ENCODE measurements at regions of chr20 and their contacts with region 1.

Region 1: DNA sequence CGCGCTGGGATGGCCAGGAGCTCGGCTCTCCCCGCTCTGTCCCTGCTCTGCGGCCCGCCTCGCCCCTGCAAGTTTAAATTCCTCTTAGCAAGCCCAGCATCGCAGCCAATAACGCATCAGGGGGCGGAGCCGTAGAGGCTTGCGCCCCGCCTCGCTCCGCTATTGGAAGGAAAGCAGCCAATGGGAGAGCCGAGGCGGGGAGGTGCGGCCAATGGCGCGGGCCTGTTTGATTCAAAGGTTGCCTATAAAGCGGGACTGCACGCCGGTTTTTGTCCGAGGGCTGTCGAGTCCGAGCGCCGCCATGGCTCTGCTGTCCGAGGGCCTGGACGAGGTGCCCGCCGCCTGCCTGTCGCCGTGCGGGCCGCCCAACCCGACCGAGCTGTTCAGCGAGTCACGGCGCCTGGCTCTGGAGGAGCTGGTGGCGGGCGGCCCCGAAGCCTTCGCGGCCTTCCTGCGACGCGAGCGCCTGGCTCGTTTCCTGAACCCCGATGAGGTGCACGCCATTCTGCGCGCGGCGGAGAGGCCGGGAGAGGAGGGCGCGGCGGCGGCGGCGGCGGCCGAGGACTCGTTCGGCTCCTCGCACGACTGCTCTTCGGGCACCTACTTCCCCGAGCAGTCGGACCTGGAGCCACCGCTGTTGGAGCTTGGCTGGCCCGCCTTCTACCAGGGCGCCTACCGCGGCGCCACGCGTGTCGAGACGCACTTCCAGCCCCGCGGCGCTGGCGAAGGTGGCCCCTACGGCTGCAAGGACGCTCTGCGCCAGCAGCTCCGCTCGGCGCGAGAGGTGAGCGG is at the start of gene FAM83D:
- DNase-seq: peak; percentile 92 to 97 (median 96)
- H3K4me3 ChIP-seq: peak within 1 kb of the TSS; percentile 37 to 86 (median 80)
- H3K4me3 Mint-ChIP-seq: peak within 1 kb of the TSS; percentile 78 to 87
- H3K27ac ChIP-seq: no peak within 1 kb of the TSS
- H3K27ac Mint-ChIP-seq: peak within 1 kb of the TSS in 4 of 7 donors; percentile 25 to 63 (median 47)
- H3K4me1 ChIP-seq: peaks cover 25 to 31% of the 10 kb centered on the region in 2 donors
- H3K4me1 Mint-ChIP-seq: peaks cover 39% of the 10 kb centered on the region
- H3K27me3 ChIP-seq: no peaks in the 10 kb centered on the region
- H3K27me3 Mint-ChIP-seq: no peaks in the 10 kb centered on the region
- CTCF ChIP-seq: peak; percentile 24
- polyA plus RNA-seq, gene FAM83D: 0.09 to 0.15 TPM in 2 of 3 donors, not detected in the other

Region 2: GRCh38 chr20:38962044-38962927 is 35.9 kb after region 1 on chr20 and contains the start of gene DHX35:
- intact Hi-C with region 1: loop called (anchors 2 to 5 kb)
- DNase-seq: peak; percentile 97 to 98 (median 98)
- H3K4me3 ChIP-seq: peak within 1 kb of the TSS; percentile 75 to 99 (median 91)
- H3K4me3 Mint-ChIP-seq: peak within 1 kb of the TSS; percentile 90 to 94
- H3K27ac ChIP-seq: peak within 1 kb of the TSS; percentile 71 to 95
- H3K27ac Mint-ChIP-seq: peak within 1 kb of the TSS; percentile 89 to 95 (median 93)
- H3K4me1 ChIP-seq: peaks cover 14 to 23% of the 10 kb centered on the region in 2 donors
- H3K4me1 Mint-ChIP-seq: peaks cover 15% of the 10 kb centered on the region
- H3K27me3 ChIP-seq: no peaks in the 10 kb centered on the region
- H3K27me3 Mint-ChIP-seq: no peaks in the 10 kb centered on the region
- CTCF ChIP-seq: no peak
- polyA plus RNA-seq, gene DHX35: 1.6 to 11.2 (median 2.7) TPM

Region 3: GRCh38 chr20:39206899-39207564 is 280.7 kb after region 1 on chr20:
- intact Hi-C with region 1: no loop called
- DNase-seq: no peak
- H3K4me3 ChIP-seq: no peak overlapping the region
- H3K4me3 Mint-ChIP-seq: no peak overlapping the region
- H3K27ac ChIP-seq: no peak overlapping the region
- H3K27ac Mint-ChIP-seq: no peak overlapping the region
- H3K4me1 ChIP-seq: no peaks in the 10 kb centered on the region
- H3K4me1 Mint-ChIP-seq: no peaks in the 10 kb centered on the region
- H3K27me3 ChIP-seq: no peaks in the 10 kb centered on the region
- H3K27me3 Mint-ChIP-seq: peaks cover 0 to 4% (median 1%) of the 10 kb centered on the region in 3 donors
- CTCF ChIP-seq: no peak

Measured in CD14-positive monocyte (primary cell).